ENCODE measurements at regions of chr3 and their contacts with region 1.

Region 1: DNA sequence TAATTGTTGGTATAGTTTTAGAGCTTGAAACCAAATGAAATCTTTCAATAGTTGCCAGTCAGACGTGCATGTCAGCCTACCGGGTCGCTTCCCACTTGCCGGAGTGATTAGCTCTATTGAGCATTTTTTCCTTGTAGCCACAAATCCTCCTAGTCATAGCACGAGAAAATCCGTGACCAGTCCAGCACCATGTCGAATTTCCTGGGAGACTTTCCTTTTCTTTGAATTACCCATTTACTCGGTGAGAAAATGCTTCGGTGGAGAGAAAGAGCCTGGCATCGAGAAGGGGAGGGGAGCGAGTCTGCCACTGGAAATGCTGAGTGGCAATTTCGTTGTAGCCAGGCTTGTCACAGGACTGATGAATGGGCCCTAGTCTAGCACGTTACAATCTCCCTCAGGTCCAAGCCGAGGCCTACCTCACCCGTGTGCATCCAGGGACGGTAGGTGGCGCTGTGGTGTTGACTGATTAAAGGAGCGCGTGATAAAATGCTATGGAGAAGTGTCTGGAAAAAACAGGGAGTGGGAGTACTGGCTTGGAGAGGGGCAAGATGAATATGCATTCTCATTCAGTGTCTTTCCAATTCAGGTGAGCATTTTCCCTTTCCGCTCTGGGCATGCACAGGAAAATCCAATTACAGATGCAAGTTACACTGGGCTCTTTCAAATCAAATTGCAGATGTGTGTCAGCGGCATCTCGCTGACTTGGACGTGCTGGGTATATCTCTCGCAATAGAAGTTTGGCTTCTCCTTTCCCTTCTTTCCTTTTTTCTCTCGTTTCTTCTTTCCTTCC is 238.8 kb downstream of the EDEM1 start:
- DNase-seq: peak; percentile 64
- H3K4me3 ChIP-seq: peak overlapping the region in 1 of 2 experiments; percentile 43; a peak in 1 of 4 replicates
- H3K27ac ChIP-seq: no peak overlapping the region
- H3K4me1 ChIP-seq: peaks cover 0 to 2% of the 10 kb centered on the region in 2 experiments; a peak in 1 of 4 replicates
- H3K27me3 ChIP-seq: no peaks in the 10 kb centered on the region
- CTCF ChIP-seq: peak; percentile 92
- EP300 ChIP-seq: no peak
- RAD21 ChIP-seq: peak; percentile 77

Region 2: DNA sequence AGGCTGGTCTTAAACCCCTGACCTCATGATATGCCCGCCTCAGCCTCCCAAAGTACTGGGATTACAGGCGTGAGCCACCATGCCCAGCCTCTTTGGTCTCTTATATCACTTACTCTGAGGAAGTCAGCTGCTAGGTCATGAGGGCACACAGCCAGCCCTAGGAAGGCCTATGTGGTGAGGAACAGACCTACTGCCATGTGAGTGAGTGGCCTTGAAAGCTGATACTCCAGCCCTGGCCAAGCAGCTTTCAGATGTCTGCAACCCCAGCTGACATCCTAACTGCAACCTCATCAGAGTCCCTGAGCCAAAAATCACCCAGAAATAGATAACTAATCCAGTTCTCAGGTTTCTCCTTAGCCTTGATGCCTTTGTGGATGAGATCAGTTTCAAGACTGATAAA is 14.5 kb before region 1 on chr3:
- CTCF ChIA-PET with region 1: interaction called, 10 read pairs
- POLR2A ChIA-PET with region 1: no interaction called
- DNase-seq: no peak
- H3K4me3 ChIP-seq: no peak overlapping the region
- H3K27ac ChIP-seq: no peak overlapping the region
- H3K4me1 ChIP-seq: no peaks in the 10 kb centered on the region
- H3K27me3 ChIP-seq: no peaks in the 10 kb centered on the region
- CTCF ChIP-seq: no peak
- EP300 ChIP-seq: no peak
- RAD21 ChIP-seq: no peak

Region 3: DNA sequence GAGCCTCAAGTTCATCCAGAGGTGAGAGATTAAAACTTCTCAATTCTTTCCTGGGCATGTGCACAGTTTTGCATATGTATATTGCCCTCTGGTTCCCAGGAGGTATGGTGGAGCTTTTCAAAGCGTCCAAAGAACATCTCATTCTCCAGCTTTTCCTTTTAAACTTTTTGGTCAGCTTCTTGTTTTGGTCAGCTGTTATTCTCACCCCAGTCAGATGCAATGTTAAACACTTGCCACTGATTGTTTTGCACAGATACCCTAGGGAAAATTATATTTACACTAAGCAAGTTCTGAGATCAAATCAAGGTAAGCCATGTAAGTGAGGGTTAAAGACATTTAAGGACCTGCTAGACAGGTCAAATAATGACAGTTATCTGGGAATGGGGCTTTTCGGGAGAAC is 22.5 kb after region 1 on chr3:
- CTCF ChIA-PET with region 1: interaction called, 11 read pairs
- POLR2A ChIA-PET with region 1: no interaction called
- DNase-seq: no peak
- H3K4me3 ChIP-seq: no peak overlapping the region
- H3K27ac ChIP-seq: no peak overlapping the region
- H3K4me1 ChIP-seq: no peaks in the 10 kb centered on the region
- H3K27me3 ChIP-seq: no peaks in the 10 kb centered on the region
- CTCF ChIP-seq: no peak
- EP300 ChIP-seq: no peak
- RAD21 ChIP-seq: no peak

Region 4: DNA sequence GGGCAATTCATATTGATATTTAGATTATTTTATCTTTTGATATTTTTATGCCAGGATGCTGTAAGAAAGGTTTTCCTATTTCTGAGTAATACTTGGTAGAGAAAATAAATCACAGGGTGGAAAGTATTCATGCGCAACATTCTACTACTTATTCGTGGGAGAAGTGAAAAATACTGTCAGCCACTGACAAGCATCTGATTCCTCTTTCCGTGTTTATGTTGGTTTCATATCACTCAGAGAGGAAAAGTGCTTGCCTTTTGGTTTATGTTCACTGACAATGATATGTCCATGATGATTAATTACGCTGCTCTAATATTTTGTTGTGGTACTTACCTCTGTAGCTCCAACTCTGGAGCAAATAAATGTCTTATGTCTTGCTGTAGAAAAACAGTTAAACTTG is 190.6 kb after region 1 on chr3:
- CTCF ChIA-PET with region 1: no interaction called
- POLR2A ChIA-PET with region 1: no interaction called
- DNase-seq: no peak
- H3K4me3 ChIP-seq: no peak overlapping the region
- H3K27ac ChIP-seq: no peak overlapping the region
- H3K4me1 ChIP-seq: no peaks in the 10 kb centered on the region
- H3K27me3 ChIP-seq: no peaks in the 10 kb centered on the region
- CTCF ChIP-seq: no peak
- EP300 ChIP-seq: no peak
- RAD21 ChIP-seq: no peak

Measured in SK-N-SH (cell line).